CD8-positive, alpha-beta T cell (primary cell): ENCODE measurements at regions of chr10 and their contacts with region 1.

Region 1: GRCh38 chr10:88346144-88346977 is 236.8 kb downstream of the RNLS start:
- DNase-seq: no peak
- ATAC-seq: no peak
- H3K4me3 ChIP-seq: no peak overlapping the region
- H3K4me3 Mint-ChIP-seq: no peak overlapping the region
- H3K27ac ChIP-seq: no peak overlapping the region
- H3K27ac Mint-ChIP-seq: no peak overlapping the region
- H3K4me1 ChIP-seq: peaks cover 10% of the 10 kb centered on the region
- H3K4me1 Mint-ChIP-seq: peaks cover 5% of the 10 kb centered on the region
- H3K27me3 ChIP-seq: no peaks in the 10 kb centered on the region
- H3K27me3 Mint-ChIP-seq: no peaks in the 10 kb centered on the region
- CTCF ChIP-seq: no peak

Region 2: DNA sequence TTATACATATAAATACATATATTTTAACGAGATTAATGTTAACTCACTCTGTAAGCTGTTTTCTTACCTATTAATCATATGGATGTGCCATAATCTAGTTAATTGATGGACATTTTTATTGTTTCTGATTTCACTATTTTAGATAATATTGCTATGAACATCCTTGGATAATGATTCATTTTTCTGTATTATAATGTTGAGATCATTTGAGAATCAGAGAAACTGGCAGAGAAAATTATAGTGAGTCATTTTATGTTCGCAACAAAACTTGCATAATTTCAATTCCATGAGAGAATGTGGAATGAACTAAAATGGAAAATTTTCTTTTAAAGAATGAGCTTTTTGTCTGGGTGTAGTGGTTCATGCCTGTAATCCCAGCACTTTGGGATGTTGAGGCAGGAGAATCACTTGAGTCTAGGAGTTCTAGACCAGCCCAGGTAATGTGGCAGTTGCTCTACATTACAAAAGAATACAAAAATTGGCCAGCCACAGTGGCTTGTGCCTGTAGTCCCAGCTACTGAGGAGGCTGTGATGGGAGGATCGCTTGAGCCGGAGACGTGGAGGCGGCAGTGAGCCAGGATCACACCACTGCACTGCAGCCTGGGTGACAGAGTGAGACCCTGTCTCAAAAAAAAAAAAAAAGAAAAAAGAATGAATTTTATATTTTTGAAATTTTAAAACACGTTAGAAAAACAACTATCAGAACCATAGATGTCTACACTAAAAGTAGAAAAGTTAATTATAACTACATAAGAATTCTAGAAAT is 646.1 kb before region 1 on chr10:
- CTCF ChIA-PET with region 1: no interaction called
- POLR2A ChIA-PET with region 1: no interaction called
- intact Hi-C with region 1: no loop called
- DNase-seq: no peak
- ATAC-seq: no peak
- H3K4me3 ChIP-seq: no peak overlapping the region
- H3K4me3 Mint-ChIP-seq: no peak overlapping the region
- H3K27ac ChIP-seq: no peak overlapping the region
- H3K27ac Mint-ChIP-seq: no peak overlapping the region
- H3K4me1 ChIP-seq: no peaks in the 10 kb centered on the region
- H3K4me1 Mint-ChIP-seq: no peaks in the 10 kb centered on the region
- H3K27me3 ChIP-seq: no peaks in the 10 kb centered on the region
- H3K27me3 Mint-ChIP-seq: peaks cover 13% of the 10 kb centered on the region
- CTCF ChIP-seq: no peak

Region 3: GRCh38 chr10:88314362-88314761 is 32.0 kb before region 1 on chr10:
- CTCF ChIA-PET with region 1: no interaction called
- POLR2A ChIA-PET with region 1: no interaction called
- intact Hi-C with region 1: loop called in 1 of 2 experiments (anchors 5 kb)
- DNase-seq: no peak
- ATAC-seq: no peak
- H3K4me3 ChIP-seq: no peak overlapping the region
- H3K4me3 Mint-ChIP-seq: no peak overlapping the region
- H3K27ac ChIP-seq: no peak overlapping the region
- H3K27ac Mint-ChIP-seq: no peak overlapping the region
- H3K4me1 ChIP-seq: no peaks in the 10 kb centered on the region
- H3K4me1 Mint-ChIP-seq: peaks cover 7% of the 10 kb centered on the region
- H3K27me3 ChIP-seq: no peaks in the 10 kb centered on the region
- H3K27me3 Mint-ChIP-seq: no peaks in the 10 kb centered on the region
- CTCF ChIP-seq: no peak